ENCODE measurements at regions of chr20 and their contacts with region 1.

Region 1: GRCh38 chr20:2172305-2173175 is 70.9 kb downstream of the STK35 start:
- DNase-seq: peak; percentile 44
- H3K4me3 Mint-ChIP-seq: no peak overlapping the region
- H3K27ac Mint-ChIP-seq: no peak overlapping the region
- H3K4me1 Mint-ChIP-seq: no peaks in the 10 kb centered on the region
- H3K27me3 Mint-ChIP-seq: peaks cover 8% of the 10 kb centered on the region

Region 2: DNA sequence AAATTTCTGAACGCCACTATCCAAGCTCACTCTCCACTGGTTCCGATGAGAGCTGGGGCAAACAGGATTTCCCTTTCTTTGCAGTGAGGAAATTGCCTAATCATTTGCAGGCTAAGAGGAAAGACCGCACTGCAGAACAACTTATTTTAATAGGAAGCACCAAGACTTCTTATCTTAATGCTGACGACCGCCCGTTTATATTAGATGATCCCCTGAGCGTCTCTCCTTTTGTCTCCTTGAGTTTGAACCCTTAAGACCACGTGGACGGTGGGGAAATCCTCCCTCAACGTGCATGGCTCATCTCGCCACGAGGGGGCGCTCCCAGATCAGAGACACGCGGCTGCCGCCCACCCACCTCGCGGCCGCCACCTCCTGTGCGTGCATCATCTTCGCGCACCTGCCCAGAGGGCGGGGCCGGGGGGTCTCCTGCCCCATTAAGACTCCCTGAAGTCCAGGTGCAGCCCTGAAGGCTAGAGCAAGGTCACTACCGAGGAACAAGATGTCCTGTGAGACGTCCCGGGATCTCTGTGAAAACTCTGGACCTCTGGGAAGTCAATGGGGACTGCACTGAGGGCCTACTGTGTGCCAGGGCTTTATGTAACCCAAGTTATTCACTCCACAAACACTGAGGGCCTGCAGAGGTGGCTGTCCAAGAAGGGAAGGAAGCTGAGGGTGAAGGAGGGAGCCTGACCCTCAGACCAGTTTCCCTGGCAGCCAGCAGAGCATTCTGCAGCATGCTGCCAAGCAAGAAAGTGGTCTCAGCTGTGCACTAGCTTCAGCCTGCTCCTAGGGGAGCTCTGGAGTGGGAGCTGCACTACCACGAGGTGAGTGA is 206.8 kb before region 1 on chr20:
- intact Hi-C with region 1: loop called (anchors 1 kb)
- DNase-seq: peak; percentile 61
- H3K4me3 Mint-ChIP-seq: peak overlapping the region; percentile 50
- H3K27ac Mint-ChIP-seq: no peak overlapping the region
- H3K4me1 Mint-ChIP-seq: peaks cover 13% of the 10 kb centered on the region
- H3K27me3 Mint-ChIP-seq: peaks cover 13% of the 10 kb centered on the region

Region 3: DNA sequence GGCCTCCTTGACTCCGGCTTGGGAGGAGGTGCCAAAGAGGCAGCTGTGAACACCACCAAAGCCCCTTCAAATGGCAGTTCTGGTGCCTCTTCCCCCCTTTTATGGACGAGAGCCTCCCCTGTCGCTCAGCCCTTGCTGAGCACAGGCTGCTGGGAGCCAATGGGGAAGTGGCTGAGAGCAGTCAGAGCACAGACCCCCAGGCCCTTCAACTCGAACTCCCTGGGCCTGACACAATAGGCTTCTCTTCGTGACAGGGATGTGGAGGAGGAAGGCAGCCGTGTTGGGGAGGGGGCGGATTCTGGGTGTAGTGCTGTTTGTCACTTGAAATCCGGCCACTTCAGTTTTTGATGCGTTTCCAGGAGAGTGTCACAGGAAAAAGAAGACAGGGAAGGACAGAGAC is 178.6 kb before region 1 on chr20 and contains the start of gene PDYN:
- intact Hi-C with region 1: no loop called
- DNase-seq: no peak
- H3K4me3 Mint-ChIP-seq: no peak within 1 kb of the TSS
- H3K27ac Mint-ChIP-seq: no peak within 1 kb of the TSS
- H3K4me1 Mint-ChIP-seq: no peaks in the 10 kb centered on the region
- H3K27me3 Mint-ChIP-seq: peaks cover 15% of the 10 kb centered on the region
- total RNA-seq, gene PDYN: not detected in 2 replicates

Region 4: GRCh38 chr20:2005831-2006426 is 166.6 kb before region 1 on chr20:
- intact Hi-C with region 1: loop called (anchors 1 kb)
- DNase-seq: peak; percentile 55
- H3K4me3 Mint-ChIP-seq: no peak overlapping the region
- H3K27ac Mint-ChIP-seq: no peak overlapping the region
- H3K4me1 Mint-ChIP-seq: no peaks in the 10 kb centered on the region
- H3K27me3 Mint-ChIP-seq: peaks cover 2% of the 10 kb centered on the region

Region 5: GRCh38 chr20:2118783-2119182 is 53.8 kb before region 1 on chr20:
- intact Hi-C with region 1: no loop called
- DNase-seq: no peak
- H3K4me3 Mint-ChIP-seq: peak overlapping the region; percentile 7
- H3K27ac Mint-ChIP-seq: peak overlapping the region; percentile 77
- H3K4me1 Mint-ChIP-seq: peaks cover 29% of the 10 kb centered on the region
- H3K27me3 Mint-ChIP-seq: no peaks in the 10 kb centered on the region

Measured in activated T-helper 2 cell treated with anti-CD3 and anti-CD28 coated beads, Interferon-gamma antibody, Interleukin-2, Interleukin-4, amounts not matched to agents 10 μg/mL and 5 μg/mL and 100 μg/mL, durations not matched to agents 14 hours and 24 hours and 36 hours (primary cell).